Activated T-helper 1 cell treated with anti-CD3 and anti-CD28 coated beads, Interleukin-12 subunit alpha, Interleukin-12 subunit beta, Interleukin-2, Interleukin-4 antibody, amounts not matched to agents 30 ng/mL and 10 ng/mL and 1 ng/mL, durations not matched to agents 14 hours and 24 hours and 36 hours (primary cell): ENCODE measurements at regions of chr9 and their contacts with region 1.

Region 1: DNA sequence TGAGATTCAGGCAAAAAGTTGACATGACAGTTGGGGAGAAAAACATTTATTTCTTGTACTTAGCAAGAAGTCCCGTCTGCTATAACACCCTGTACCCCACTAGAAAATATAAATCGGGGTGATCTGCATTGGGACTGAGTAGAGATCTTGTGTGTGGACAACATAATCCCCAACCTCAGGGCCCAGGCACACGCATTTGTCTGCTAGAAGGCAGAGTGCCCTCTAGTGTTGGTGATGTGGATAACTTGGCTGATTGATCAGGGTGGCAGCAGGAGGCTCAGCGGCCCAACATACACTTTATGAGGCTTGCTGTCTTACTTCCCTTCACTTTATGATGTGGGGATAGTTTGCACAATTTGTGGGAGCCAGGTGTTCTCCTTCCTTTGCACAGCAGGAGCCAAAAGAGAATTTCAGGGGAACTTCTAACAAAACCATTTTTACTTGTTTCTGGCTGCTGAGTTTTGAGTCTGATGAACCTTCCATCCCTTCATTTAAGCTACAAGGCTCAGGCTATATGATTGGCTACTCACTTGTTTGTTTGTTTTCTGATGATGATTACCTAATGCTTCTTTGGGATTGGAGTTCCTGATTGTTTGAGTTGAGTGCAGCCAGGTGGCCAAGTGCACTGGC is 263.2 kb downstream of the DMAC1 start:
- DNase-seq: peak; percentile 31
- H3K4me3 Mint-ChIP-seq: no peak overlapping the region
- H3K27ac Mint-ChIP-seq: no peak overlapping the region
- H3K4me1 Mint-ChIP-seq: peaks cover 45% of the 10 kb centered on the region
- H3K27me3 Mint-ChIP-seq: peaks cover 4% of the 10 kb centered on the region

Region 2: DNA sequence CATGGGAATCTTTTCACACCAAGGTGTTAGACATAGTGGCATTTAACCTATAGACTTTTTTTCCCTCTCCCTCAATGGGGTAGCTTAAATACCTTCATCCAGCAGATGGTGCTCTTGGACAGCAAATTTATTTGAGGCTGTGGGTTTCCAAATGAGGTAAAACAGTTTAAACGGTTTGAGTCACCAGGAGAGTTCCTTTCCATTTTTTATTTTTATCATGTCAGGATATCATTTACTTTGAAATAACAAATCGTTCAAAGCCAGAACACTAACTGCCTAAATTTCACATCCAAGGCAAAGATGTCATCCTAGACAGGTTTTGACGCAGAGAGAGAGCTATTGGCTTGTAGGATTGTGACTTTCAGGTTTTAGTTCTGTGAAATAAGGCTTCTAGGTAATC is 709.0 kb before region 1 on chr9:
- intact Hi-C with region 1: loop called (anchors 1 kb)
- DNase-seq: peak; percentile 27
- H3K4me3 Mint-ChIP-seq: no peak overlapping the region
- H3K27ac Mint-ChIP-seq: peak overlapping the region; percentile 57
- H3K4me1 Mint-ChIP-seq: peaks cover 10% of the 10 kb centered on the region
- H3K27me3 Mint-ChIP-seq: no peaks in the 10 kb centered on the region

Region 3: DNA sequence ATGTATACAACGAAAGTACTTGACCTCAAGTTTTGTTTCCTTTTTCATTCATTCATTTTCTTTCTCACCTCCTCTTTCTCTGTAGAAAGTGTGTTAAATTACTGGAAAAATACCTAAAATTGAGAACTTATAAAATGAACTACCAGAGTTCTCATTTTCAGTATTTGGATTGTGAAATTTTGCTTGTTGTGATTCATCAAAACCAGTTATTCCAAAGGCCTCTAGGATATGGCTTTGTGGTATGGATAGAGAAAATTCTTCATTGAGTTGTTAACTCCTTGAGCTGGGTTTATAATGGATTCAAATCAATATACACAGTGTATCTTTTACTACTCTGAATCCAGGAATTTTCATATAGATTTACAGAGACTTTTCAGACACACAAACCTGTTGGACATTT is 491.1 kb before region 1 on chr9:
- intact Hi-C with region 1: loop called (anchors 2 kb)
- DNase-seq: no peak
- H3K4me3 Mint-ChIP-seq: no peak overlapping the region
- H3K27ac Mint-ChIP-seq: peak overlapping the region; percentile 54
- H3K4me1 Mint-ChIP-seq: peaks cover 17% of the 10 kb centered on the region
- H3K27me3 Mint-ChIP-seq: no peaks in the 10 kb centered on the region

Region 4: DNA sequence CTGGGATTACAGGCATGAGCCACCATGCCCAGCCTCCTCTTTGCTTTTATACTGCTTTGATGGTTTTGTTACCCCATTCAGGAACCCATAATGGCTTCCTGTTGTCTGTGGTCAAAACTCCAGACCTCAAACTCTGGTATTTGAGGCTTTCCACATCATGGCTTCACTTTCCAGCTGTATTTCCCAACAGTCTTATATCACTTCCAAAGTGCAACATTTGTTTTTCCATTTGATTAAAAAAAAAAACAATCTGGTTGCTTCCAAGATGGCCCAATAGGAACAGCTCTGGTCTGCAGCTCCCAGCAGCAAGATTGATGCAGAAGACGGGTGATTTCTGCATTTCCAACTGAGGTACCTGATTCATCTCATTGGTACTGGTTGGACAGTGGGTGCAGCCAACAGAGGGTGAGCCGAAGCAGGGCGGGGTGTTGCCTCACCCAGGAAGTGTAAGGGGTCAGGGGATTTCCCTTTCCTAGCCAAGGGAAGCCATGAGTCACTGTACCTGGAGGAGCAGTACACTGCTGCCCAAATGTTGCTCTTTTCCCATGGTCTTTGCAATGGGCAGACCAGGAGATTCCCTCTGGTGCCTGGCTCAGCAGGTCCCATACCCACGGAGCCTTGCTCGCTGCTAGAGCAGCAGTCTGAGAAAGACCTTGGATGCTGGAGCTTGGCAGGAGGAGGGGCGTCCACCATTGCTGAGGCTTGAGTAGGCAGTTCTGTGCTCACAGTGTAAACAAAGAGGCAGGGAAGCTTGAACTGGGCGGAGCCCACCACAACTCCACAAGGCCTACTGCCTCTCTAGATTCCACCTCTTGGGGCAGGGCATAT is 320.2 kb before region 1 on chr9:
- intact Hi-C with region 1: loop called (anchors 1 kb)
- DNase-seq: peak; percentile 59
- H3K4me3 Mint-ChIP-seq: peak overlapping the region; percentile 27
- H3K27ac Mint-ChIP-seq: peak overlapping the region; percentile 52
- H3K4me1 Mint-ChIP-seq: peaks cover 38% of the 10 kb centered on the region
- H3K27me3 Mint-ChIP-seq: peaks cover 24% of the 10 kb centered on the region

Region 5: GRCh38 chr9:7298123-7298522 is 238.3 kb before region 1 on chr9:
- intact Hi-C with region 1: loop called (anchors 2 kb)
- DNase-seq: peak; percentile 6
- H3K4me3 Mint-ChIP-seq: no peak overlapping the region
- H3K27ac Mint-ChIP-seq: peak overlapping the region; percentile 18
- H3K4me1 Mint-ChIP-seq: peaks cover 11% of the 10 kb centered on the region
- H3K27me3 Mint-ChIP-seq: peaks cover 18% of the 10 kb centered on the region

Region 6: GRCh38 chr9:7467186-7467585 is 69.2 kb before region 1 on chr9:
- intact Hi-C with region 1: no loop called
- DNase-seq: no peak
- H3K4me3 Mint-ChIP-seq: no peak overlapping the region
- H3K27ac Mint-ChIP-seq: no peak overlapping the region
- H3K4me1 Mint-ChIP-seq: no peaks in the 10 kb centered on the region
- H3K27me3 Mint-ChIP-seq: peaks cover 17% of the 10 kb centered on the region

Region 7: DNA sequence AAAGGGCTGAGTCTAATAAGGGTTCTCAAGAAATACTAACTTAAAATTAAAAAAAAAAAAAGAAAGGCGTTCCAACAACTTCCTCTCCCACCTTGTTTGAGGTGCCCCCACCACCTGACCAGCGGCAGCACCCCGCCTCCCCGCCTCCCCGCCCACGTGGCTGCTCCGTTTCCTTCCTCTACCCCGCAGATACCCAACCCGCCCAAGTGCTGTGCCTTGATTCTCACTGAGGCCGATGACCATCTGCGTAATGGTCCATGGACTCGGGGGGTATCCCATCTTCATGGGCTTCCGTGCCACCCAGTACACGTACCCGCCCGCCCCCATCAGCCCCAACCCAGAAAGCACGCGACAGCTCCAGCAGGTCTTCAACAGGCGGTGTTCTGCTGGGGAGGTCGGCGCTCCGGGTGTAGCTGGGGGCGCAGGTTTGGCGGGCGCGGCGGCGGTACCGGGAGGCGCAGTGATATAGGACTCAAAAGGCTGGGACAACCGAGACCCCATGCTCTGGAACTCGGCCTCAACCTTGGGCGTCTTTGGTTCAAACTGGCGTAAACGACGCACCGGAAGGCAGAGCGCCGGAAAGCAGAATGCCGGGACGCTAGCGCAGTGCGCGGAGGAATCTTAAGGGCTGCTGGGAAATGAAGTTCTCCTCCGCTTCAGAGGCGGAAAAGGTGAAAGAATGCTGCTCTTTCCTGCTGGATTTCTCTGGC is 263.0 kb after region 1 on chr9 and contains the start of gene DMAC1:
- intact Hi-C with region 1: loop called (anchors 5 kb)
- DNase-seq: peak; percentile 69
- H3K4me3 Mint-ChIP-seq: peak within 1 kb of the TSS; percentile 96
- H3K27ac Mint-ChIP-seq: peak within 1 kb of the TSS; percentile 94
- H3K4me1 Mint-ChIP-seq: peaks cover 20% of the 10 kb centered on the region
- H3K27me3 Mint-ChIP-seq: no peaks in the 10 kb centered on the region
- total RNA-seq, gene DMAC1: 45.3 and 46.4 TPM in 2 replicates

Region 8: GRCh38 chr9:8052996-8053395 is 516.6 kb after region 1 on chr9:
- intact Hi-C with region 1: no loop called
- DNase-seq: no peak
- H3K4me3 Mint-ChIP-seq: no peak overlapping the region
- H3K27ac Mint-ChIP-seq: no peak overlapping the region
- H3K4me1 Mint-ChIP-seq: no peaks in the 10 kb centered on the region
- H3K27me3 Mint-ChIP-seq: no peaks in the 10 kb centered on the region